GM12878 (cell line): ENCODE measurements at regions of chr2 and their contacts with region 1.

Region 1: DNA sequence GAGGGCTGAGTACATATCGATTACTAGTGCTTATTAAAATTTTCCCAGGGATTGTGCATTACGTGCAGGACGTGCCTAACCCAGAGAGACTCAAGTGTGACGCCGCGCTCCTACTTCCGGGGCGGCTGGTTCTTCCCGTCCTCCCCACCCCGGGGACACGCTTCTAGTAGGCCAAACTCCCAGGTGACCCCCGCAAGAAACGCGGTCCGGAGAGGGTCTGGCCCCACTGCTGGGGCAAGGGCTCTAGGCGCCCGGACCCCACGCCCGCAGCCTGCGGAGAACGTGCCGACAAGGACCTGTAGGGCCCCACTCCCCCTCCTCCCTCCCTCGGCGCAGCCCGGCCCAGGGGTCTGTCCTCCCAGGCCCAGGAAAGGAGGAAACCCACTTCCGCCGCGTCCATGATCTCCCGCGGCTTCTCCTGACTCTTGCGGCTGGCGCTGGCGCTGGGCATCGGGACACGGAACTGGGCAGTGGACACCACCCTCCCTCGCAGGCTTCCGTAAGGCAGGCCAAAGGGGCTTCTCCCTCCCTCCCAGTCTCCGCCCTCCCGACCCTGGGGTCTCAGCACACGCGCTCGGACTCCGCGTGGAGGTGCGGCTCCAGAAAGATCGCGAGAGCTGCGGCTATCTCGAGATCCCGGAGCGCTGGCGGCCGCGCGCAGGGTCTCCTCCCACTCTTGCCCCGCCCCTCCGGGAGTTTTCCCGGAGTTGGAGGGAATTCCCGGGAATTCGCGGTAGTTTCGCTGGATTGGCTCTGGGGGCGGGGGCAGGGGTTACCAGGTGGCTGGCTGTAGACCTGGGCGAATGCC is at the start of gene DARS1:
- DNase-seq: peak; percentile 79
- ATAC-seq: peak; percentile 86
- H3K4me3 ChIP-seq: peak within 1 kb of the TSS; percentile 88
- H3K27ac ChIP-seq: peak within 1 kb of the TSS; percentile 95
- H3K4me1 ChIP-seq: peaks cover 8% of the 10 kb centered on the region
- H3K27me3 ChIP-seq: no peaks in the 10 kb centered on the region
- CTCF ChIP-seq: no peak
- EP300 ChIP-seq: peak in 1 of 2 experiments; percentile 31; a peak in 2 of 4 replicates
- POLR2A ChIP-seq: peak; percentile 95
- RAD21 ChIP-seq: no peak
- polyA plus RNA-seq, gene DARS1: 102 to 134 TPM

Region 2: DNA sequence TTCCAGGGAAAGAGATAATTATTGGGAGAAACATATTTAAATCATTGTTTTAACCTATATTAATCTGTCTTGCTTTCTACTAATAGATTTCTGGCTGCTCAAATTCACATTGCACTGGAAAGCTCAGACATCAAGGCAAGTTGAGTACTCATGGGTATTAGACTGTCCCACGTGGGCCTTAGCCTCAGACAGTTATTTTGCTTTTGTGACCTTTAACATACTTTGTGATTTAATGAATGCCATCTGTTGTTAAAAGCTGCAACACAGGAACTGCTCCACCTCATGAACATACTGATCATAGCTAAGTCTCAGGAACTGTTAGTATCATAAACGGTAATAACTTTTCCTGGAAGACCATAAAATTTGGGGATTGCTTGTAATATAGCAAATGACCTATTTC is 145.5 kb before region 1 on chr2:
- CTCF ChIA-PET with region 1: no interaction called
- POLR2A ChIA-PET with region 1: no interaction called
- RAD21 ChIA-PET with region 1: no interaction called
- SMC1A ChIA-PET with region 1: no interaction called
- in situ Hi-C with region 1: no loop called
- intact Hi-C with region 1: no loop called
- DNase-seq: no peak
- ATAC-seq: no peak
- H3K4me3 ChIP-seq: no peak overlapping the region
- H3K27ac ChIP-seq: no peak overlapping the region
- H3K4me1 ChIP-seq: no peaks in the 10 kb centered on the region
- H3K27me3 ChIP-seq: no peaks in the 10 kb centered on the region
- CTCF ChIP-seq: no peak
- EP300 ChIP-seq: no peak
- POLR2A ChIP-seq: no peak
- RAD21 ChIP-seq: no peak

Region 3: GRCh38 chr2:135942936-135943688 is 42.1 kb before region 1 on chr2:
- CTCF ChIA-PET with region 1: interaction called, 9 read pairs
- POLR2A ChIA-PET with region 1: interaction called, 4 read pairs
- RAD21 ChIA-PET with region 1: interaction called, 19 read pairs
- SMC1A ChIA-PET with region 1: interaction called, 14 read pairs
- in situ Hi-C with region 1: no loop called
- intact Hi-C with region 1: no loop called
- DNase-seq: no peak
- ATAC-seq: no peak
- H3K4me3 ChIP-seq: no peak overlapping the region
- H3K27ac ChIP-seq: no peak overlapping the region
- H3K4me1 ChIP-seq: no peaks in the 10 kb centered on the region
- H3K27me3 ChIP-seq: no peaks in the 10 kb centered on the region
- CTCF ChIP-seq: no peak
- EP300 ChIP-seq: no peak
- POLR2A ChIP-seq: no peak
- RAD21 ChIP-seq: no peak

Region 4: DNA sequence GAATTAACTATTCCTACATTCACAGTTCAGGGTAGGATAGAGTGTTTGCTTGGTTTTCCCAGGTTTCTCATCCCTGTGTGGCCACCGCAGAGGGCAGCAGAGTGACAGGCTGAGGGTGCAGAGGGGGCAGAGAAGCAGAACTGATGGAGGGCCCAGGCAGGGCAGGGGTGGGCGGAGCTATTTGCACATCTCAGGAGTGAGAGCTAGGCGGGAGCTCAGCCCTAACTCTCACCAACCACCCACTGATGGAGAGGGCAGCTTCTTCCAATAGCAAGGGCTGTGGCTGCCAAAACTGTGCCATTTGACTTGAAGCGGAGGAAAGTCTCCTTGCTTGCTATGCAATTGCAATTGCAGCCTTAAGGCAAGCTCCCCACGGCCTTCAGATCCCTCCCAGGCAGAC is 12.2 kb after region 1 on chr2:
- CTCF ChIA-PET with region 1: interaction called, 42 read pairs
- POLR2A ChIA-PET with region 1: interaction called, 26 read pairs
- RAD21 ChIA-PET with region 1: interaction called, 49 read pairs
- SMC1A ChIA-PET with region 1: interaction called, 117 read pairs
- in situ Hi-C with region 1: no loop called
- intact Hi-C with region 1: no loop called
- DNase-seq: no peak
- ATAC-seq: peak; percentile 82
- H3K4me3 ChIP-seq: no peak overlapping the region
- H3K27ac ChIP-seq: no peak overlapping the region
- H3K4me1 ChIP-seq: peaks cover 11% of the 10 kb centered on the region
- H3K27me3 ChIP-seq: no peaks in the 10 kb centered on the region
- CTCF ChIP-seq: peak; percentile 5 to 27 (median 7); a peak in 3 of 6 replicates
- EP300 ChIP-seq: no peak
- POLR2A ChIP-seq: no peak
- RAD21 ChIP-seq: peak; percentile 61

Region 5: DNA sequence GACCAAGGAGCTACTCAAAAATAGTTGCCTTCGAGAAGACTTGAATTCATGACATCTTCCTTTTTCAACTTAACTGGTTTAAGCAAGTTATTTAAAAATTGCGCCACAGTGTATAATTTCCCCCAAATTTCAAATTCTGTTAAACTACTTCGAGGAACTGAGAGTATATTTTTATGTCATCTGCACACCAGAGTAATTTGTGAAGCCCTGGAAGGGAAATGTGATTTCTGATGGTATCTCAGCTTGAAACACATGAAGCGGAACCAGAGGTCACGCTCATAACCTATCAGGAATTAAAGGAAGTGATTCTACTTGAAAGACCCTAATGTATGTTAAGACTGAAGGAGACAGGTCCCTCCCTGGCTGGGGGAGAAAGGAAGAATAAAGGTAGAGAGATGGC is 34.1 kb after region 1 on chr2:
- CTCF ChIA-PET with region 1: interaction called, 7 read pairs
- POLR2A ChIA-PET with region 1: interaction called, 8 read pairs
- RAD21 ChIA-PET with region 1: interaction called, 45 read pairs
- SMC1A ChIA-PET with region 1: interaction called, 153 read pairs
- in situ Hi-C with region 1: no loop called
- intact Hi-C with region 1: loop called (anchors 1 kb)
- DNase-seq: peak; percentile 40
- ATAC-seq: peak; percentile 78
- H3K4me3 ChIP-seq: no peak overlapping the region
- H3K27ac ChIP-seq: no peak overlapping the region
- H3K4me1 ChIP-seq: peaks cover 8% of the 10 kb centered on the region
- H3K27me3 ChIP-seq: no peaks in the 10 kb centered on the region
- CTCF ChIP-seq: no peak
- EP300 ChIP-seq: peak; percentile 78 to 87; a peak in 2 of 4 replicates
- POLR2A ChIP-seq: no peak
- RAD21 ChIP-seq: 0 out of 2 replicates have a peak, but pooled peaks have one; percentile 6

Region 6: GRCh38 chr2:136117909-136118818 is 132.9 kb after region 1 on chr2 and contains the start of gene CXCR4:
- CTCF ChIA-PET with region 1: no interaction called
- POLR2A ChIA-PET with region 1: interaction called, 5 read pairs
- RAD21 ChIA-PET with region 1: interaction called, 8 read pairs
- SMC1A ChIA-PET with region 1: interaction called, 6 read pairs
- in situ Hi-C with region 1: no loop called
- intact Hi-C with region 1: loop called (anchors 2 kb)
- DNase-seq: no peak
- ATAC-seq: peak; percentile 43
- H3K4me3 ChIP-seq: peak within 1 kb of the TSS; percentile 85
- H3K27ac ChIP-seq: peak within 1 kb of the TSS; percentile 40; the same call in 1 of the 2 replicates
- H3K4me1 ChIP-seq: peaks cover 2% of the 10 kb centered on the region; the same call in 1 of the 2 replicates
- H3K27me3 ChIP-seq: peaks cover 0 to 12% of the 10 kb centered on the region in 2 experiments
- CTCF ChIP-seq: peak in 1 of 3 experiments; percentile 19; a peak in 1 of 6 replicates
- EP300 ChIP-seq: no peak
- POLR2A ChIP-seq: peak; percentile 97
- RAD21 ChIP-seq: 0 out of 2 replicates have a peak, but pooled peaks have one; percentile 9
- polyA plus RNA-seq, gene CXCR4: 31.1 to 32.3 TPM